MCF 10A (cell line): ENCODE measurements at regions of chr11 and their contacts with region 1.

Region 1: DNA sequence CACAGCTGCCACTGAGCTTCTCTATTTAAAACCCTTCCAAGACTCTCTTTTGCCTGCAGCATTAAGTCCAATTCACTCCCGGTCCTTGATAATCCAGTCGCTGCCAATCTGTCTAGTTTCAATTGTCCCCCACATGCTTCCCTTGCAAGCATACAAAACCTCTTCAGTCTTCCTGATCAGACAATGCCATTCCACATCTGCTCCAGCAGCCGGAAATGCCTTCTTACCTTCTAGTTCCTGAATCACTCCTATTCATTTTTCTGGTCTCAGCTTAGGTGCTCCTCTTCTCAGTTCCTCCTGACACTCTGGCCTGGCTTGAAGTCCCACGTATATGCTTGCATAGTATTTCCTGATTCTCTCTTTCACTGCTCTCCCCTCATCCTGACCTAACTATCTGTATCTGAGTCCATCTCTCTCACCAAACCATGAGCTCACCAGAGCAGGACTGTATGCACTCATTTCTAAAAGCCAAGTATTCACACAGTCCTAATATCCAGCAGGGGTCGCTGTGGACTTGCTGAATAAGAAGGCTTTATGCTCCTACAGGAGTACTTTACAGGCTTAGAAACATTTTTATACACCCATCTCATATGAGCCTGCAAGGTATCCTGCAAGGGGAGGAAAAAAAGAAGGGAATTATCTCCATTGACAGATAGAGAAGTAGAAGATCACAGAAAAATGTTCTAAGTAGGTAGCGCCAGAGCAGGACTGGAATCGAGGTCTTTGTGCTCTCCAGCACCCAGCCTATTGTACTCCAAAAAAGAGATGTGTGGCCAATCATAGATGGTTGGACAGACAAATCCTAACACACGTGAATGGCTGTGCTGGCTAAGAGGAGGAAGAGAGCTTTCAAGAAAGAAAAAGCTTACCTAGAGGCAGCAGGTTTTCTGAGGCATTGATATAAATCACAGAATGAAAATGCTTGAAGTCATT is 19.2 kb downstream of the XRRA1 start:
- DNase-seq: peak; percentile 94
- H3K4me3 Mint-ChIP-seq: no peak overlapping the region
- H3K27ac Mint-ChIP-seq: no peak overlapping the region
- H3K4me1 Mint-ChIP-seq: peaks cover 4% of the 10 kb centered on the region
- H3K27me3 Mint-ChIP-seq: no peaks in the 10 kb centered on the region
- CTCF ChIP-seq: peak; percentile 84

Region 2: DNA sequence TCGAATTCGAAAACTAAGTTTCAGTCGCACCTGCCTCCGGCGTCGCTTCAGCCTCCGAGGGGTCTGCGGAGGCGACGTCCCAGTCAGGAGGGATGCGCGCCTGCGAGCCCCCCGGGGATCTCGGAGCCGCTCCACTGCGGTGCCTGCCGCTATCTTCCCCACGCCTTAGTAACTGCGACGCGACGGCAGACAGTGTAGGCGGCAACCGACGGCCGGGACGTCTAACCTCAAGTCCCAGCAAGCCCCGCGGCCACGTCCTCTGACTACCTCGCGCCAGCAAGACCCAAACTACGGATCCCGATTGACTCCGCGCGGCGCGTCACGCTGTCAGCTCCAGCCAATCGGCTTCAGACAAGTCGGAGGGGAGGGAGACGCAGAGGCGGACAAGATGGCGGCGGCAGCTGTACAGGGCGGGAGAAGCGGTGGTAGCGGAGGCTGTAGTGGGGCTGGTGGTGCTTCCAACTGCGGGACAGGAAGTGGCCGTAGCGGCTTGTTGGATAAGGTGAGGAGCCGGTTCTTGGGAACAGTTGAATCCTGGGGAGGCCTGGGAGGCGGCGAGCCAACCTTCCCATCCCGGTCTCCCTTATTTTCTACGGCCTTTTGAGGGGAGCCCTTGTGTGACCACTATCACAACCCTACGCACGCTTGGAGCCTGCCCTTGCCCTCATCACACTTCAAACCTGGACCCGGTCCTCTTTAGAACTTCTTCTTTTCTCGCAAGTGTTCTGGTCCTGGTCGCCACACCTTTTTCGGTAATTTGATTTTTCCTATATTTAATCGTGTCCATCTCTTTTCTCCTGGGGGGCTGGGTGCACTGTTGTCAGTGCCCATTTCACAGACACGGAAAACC is 19.4 kb after region 1 on chr11 and contains the starts of genes SPCS2 and XRRA1:
- CTCF ChIA-PET with region 1: interaction called, 10 read pairs
- POLR2A ChIA-PET with region 1: interaction called, 3 read pairs
- intact Hi-C with region 1: no loop called
- DNase-seq: peak; percentile 98
- H3K4me3 Mint-ChIP-seq: peak within 1 kb of the TSS; percentile 96
- H3K27ac Mint-ChIP-seq: peak within 1 kb of the TSS; percentile 93
- H3K4me1 Mint-ChIP-seq: peaks cover 35% of the 10 kb centered on the region
- H3K27me3 Mint-ChIP-seq: no peaks in the 10 kb centered on the region
- CTCF ChIP-seq: no peak
- total RNA-seq, gene SPCS2: 198 and 217 TPM in 2 replicates
- total RNA-seq, gene XRRA1: 49.3 and 49.6 TPM in 2 replicates

Region 3: DNA sequence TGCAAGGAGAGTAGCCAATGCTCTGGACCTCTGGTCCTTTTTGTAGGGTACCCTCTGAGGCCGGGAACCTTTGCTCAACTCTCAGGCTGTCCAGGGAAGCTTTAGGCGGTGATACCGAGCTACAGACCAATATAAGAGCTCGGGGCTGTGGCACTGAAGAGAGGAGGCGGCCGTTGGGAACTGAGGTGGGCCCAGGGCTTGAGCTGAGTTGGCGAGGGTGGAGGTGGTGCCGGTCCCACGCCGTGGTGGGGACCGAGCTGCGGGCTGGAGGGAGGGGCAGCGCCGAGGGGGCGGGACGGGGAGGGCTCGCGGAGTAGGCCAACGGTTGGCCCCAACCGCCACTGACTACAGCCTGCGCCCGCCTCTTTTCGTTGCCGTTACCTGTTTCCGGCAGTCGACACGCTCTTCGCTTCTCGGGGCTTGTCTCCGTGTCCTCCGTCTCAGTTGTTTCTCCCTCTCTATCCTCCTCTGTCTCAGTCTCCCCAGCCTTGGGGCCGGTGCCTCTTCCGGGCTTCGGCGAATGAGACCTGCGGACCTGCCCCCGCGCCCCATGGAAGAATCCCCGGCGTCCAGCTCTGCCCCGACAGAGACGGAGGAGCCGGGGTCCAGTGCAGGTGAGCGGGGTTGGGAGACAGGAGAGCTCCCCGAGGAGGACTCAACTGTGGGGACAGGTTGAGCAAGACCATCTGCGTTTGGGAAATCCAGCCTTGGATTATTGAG is 59.0 kb after region 1 on chr11 and contains the start of gene NEU3:
- CTCF ChIA-PET with region 1: interaction called, 5 read pairs
- POLR2A ChIA-PET with region 1: interaction called, 6 read pairs
- intact Hi-C with region 1: loop called (anchors 2 kb)
- DNase-seq: peak; percentile 83
- H3K4me3 Mint-ChIP-seq: peak within 1 kb of the TSS; percentile 93
- H3K27ac Mint-ChIP-seq: peak within 1 kb of the TSS; percentile 90
- H3K4me1 Mint-ChIP-seq: peaks cover 15% of the 10 kb centered on the region
- H3K27me3 Mint-ChIP-seq: no peaks in the 10 kb centered on the region
- CTCF ChIP-seq: no peak
- total RNA-seq, gene NEU3: 8.7 and 10.0 TPM in 2 replicates

Region 4: GRCh38 chr11:75031771-75032549 is 102.3 kb after region 1 on chr11:
- CTCF ChIA-PET with region 1: interaction called, 25 read pairs
- POLR2A ChIA-PET with region 1: no interaction called
- intact Hi-C with region 1: loop called (anchors 1 kb)
- DNase-seq: peak; percentile 77
- H3K4me3 Mint-ChIP-seq: no peak overlapping the region
- H3K27ac Mint-ChIP-seq: no peak overlapping the region
- H3K4me1 Mint-ChIP-seq: peaks cover 16% of the 10 kb centered on the region
- H3K27me3 Mint-ChIP-seq: peaks cover 13% of the 10 kb centered on the region
- CTCF ChIP-seq: peak; percentile 63

Region 5: GRCh38 chr11:75262961-75263852 is 333.5 kb after region 1 on chr11:
- CTCF ChIA-PET with region 1: no interaction called
- POLR2A ChIA-PET with region 1: no interaction called
- intact Hi-C with region 1: no loop called
- DNase-seq: no peak
- H3K4me3 Mint-ChIP-seq: no peak overlapping the region
- H3K27ac Mint-ChIP-seq: no peak overlapping the region
- H3K4me1 Mint-ChIP-seq: no peaks in the 10 kb centered on the region
- H3K27me3 Mint-ChIP-seq: peaks cover 15% of the 10 kb centered on the region
- CTCF ChIP-seq: no peak